SK-N-SH (cell line): ENCODE measurements at regions of chr1 and their contacts with region 1.

Region 1: GRCh38 chr1:60156371-60156770 is 82.8 kb upstream of the C1orf87 start:
- DNase-seq: no peak
- H3K4me3 ChIP-seq: no peak overlapping the region
- H3K27ac ChIP-seq: no peak overlapping the region
- H3K4me1 ChIP-seq: peaks cover 0 to 3% of the 10 kb centered on the region in 2 experiments; a peak in 2 of 4 replicates
- H3K27me3 ChIP-seq: no peaks in the 10 kb centered on the region
- CTCF ChIP-seq: no peak
- EP300 ChIP-seq: no peak
- RAD21 ChIP-seq: no peak

Region 2: GRCh38 chr1:59926381-59927123 is 229.8 kb before region 1 on chr1 and contains the start of gene CYP2J2:
- CTCF ChIA-PET with region 1: no interaction called
- POLR2A ChIA-PET with region 1: no interaction called
- DNase-seq: peak; percentile 82
- H3K4me3 ChIP-seq: peak within 1 kb of the TSS; percentile 66 to 75
- H3K27ac ChIP-seq: peak within 1 kb of the TSS in 1 of 2 experiments; percentile 56; a peak in 1 of 4 replicates
- H3K4me1 ChIP-seq: peaks cover 0 to 2% of the 10 kb centered on the region in 2 experiments; a peak in 1 of 4 replicates
- H3K27me3 ChIP-seq: 0 out of 2 replicates have a peak, but pooled peaks cover 6% of the 10 kb centered on the region
- CTCF ChIP-seq: no peak
- EP300 ChIP-seq: no peak
- RAD21 ChIP-seq: no peak
- polyA plus RNA-seq, gene CYP2J2: 1.1 and 1.2 TPM in 2 replicates

Region 3: GRCh38 chr1:60171801-60172200 is 15.4 kb after region 1 on chr1:
- CTCF ChIA-PET with region 1: interaction called, 19 read pairs
- POLR2A ChIA-PET with region 1: no interaction called
- DNase-seq: no peak
- H3K4me3 ChIP-seq: no peak overlapping the region
- H3K27ac ChIP-seq: no peak overlapping the region
- H3K4me1 ChIP-seq: no peaks in the 10 kb centered on the region; a peak in 1 of 4 replicates
- H3K27me3 ChIP-seq: no peaks in the 10 kb centered on the region
- CTCF ChIP-seq: no peak
- EP300 ChIP-seq: peak in 1 of 2 experiments; percentile 30; a peak in 1 of 4 replicates
- RAD21 ChIP-seq: no peak